ENCODE measurements at regions of chr1 and their contacts with region 1.

Region 1: DNA sequence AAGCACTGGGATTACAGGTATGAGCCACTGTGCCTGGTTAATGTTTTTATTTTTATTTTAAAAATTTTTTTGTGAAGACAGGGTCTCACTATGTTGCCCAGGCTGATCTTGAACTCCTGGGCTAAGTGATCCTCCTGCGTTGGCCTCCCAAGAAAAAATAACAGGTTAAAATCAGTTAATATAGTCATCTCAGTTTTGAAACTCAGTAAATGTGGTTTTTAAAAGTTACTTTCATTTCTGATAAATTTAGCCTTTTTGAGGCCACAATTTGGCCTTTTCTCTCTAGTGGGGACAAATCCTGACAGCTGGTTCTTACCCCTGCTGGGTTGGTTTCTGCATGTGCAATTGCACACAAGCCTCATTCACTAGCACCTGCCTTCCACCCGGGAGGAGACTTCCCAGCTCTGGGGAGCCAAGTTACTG is 13.3 kb downstream of the PMF1 start:
- DNase-seq: no peak
- ATAC-seq: no peak
- H3K4me3 ChIP-seq: no peak overlapping the region
- H3K4me3 Mint-ChIP-seq: no peak overlapping the region
- H3K27ac ChIP-seq: no peak overlapping the region
- H3K27ac Mint-ChIP-seq: no peak overlapping the region
- H3K4me1 ChIP-seq: no peaks in the 10 kb centered on the region
- H3K4me1 Mint-ChIP-seq: peaks cover 4% of the 10 kb centered on the region
- H3K27me3 ChIP-seq: no peaks in the 10 kb centered on the region
- H3K27me3 Mint-ChIP-seq: no peaks in the 10 kb centered on the region
- CTCF ChIP-seq: no peak

Region 2: DNA sequence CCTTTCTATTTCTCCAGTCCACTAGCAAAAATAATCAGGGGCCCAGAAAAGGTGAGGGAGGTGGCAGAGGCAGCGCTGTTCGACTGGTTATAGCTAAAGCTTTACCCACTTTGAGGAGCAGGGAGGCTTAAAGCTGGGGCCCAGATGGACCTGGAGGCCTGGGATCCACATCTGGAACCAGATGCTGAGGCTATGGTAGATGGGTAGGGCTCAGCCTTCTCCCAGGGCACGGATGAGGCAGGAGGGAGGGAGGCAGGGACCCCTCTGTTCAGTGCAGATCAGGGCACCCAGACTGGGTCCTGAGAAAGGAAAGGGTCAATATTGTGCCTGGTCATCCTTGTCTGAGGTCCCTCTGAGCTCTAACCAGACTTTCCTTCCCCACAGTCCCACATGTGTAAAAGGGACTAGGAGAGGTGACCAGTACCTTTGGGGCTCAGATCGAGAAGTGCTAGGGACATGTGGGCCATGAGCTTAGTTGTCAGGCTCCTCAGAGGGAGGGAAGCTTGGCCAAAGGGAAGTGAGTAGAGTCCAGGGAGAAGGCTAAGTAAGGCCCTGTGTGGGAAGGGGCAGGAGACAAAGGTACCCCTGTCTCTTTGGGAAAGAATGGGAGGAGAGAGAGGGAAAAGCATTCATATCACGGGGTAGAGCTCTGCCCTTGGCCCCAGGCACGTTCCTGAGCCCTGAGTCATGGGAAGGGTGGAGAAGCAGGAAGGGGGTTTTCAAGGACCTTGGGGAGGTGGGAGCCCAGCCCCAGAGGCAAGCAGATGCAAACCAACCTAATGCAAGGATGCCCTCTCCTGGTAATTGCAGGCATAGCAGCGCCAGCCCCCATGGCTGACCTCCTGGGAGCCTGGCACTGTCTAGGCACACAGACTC is 96.2 kb before region 1 on chr1:
- CTCF ChIA-PET with region 1: interaction called, 47 read pairs
- POLR2A ChIA-PET with region 1: no interaction called
- intact Hi-C with region 1: no loop called
- DNase-seq: peak; percentile 84
- ATAC-seq: peak; percentile 69
- H3K4me3 ChIP-seq: no peak overlapping the region
- H3K4me3 Mint-ChIP-seq: no peak overlapping the region
- H3K27ac ChIP-seq: no peak overlapping the region
- H3K27ac Mint-ChIP-seq: peak overlapping the region; percentile 26
- H3K4me1 ChIP-seq: peaks cover 14 to 21% of the 10 kb centered on the region in 2 donors
- H3K4me1 Mint-ChIP-seq: peaks cover 28% of the 10 kb centered on the region
- H3K27me3 ChIP-seq: peaks cover 0 to 4% (median 1%) of the 10 kb centered on the region in 4 experiments
- H3K27me3 Mint-ChIP-seq: peaks cover 2% of the 10 kb centered on the region
- CTCF ChIP-seq: peak; percentile 95

Region 3: GRCh38 chr1:156154317-156154749 is 71.8 kb before region 1 on chr1:
- CTCF ChIA-PET with region 1: interaction called, 381 read pairs
- POLR2A ChIA-PET with region 1: interaction called, 3 read pairs
- intact Hi-C with region 1: no loop called
- DNase-seq: peak; percentile 92
- ATAC-seq: peak; percentile 96
- H3K4me3 ChIP-seq: peak overlapping the region; percentile 38 to 71 (median 54)
- H3K4me3 Mint-ChIP-seq: peak overlapping the region; percentile 80
- H3K27ac ChIP-seq: peak overlapping the region; percentile 74 to 90
- H3K27ac Mint-ChIP-seq: peak overlapping the region; percentile 91
- H3K4me1 ChIP-seq: peaks cover 89 to 100% of the 10 kb centered on the region in 2 donors
- H3K4me1 Mint-ChIP-seq: peaks cover 94% of the 10 kb centered on the region
- H3K27me3 ChIP-seq: peaks cover 0 to 13% (median 4%) of the 10 kb centered on the region in 4 experiments
- H3K27me3 Mint-ChIP-seq: peaks cover 26% of the 10 kb centered on the region
- CTCF ChIP-seq: no peak

Region 4: DNA sequence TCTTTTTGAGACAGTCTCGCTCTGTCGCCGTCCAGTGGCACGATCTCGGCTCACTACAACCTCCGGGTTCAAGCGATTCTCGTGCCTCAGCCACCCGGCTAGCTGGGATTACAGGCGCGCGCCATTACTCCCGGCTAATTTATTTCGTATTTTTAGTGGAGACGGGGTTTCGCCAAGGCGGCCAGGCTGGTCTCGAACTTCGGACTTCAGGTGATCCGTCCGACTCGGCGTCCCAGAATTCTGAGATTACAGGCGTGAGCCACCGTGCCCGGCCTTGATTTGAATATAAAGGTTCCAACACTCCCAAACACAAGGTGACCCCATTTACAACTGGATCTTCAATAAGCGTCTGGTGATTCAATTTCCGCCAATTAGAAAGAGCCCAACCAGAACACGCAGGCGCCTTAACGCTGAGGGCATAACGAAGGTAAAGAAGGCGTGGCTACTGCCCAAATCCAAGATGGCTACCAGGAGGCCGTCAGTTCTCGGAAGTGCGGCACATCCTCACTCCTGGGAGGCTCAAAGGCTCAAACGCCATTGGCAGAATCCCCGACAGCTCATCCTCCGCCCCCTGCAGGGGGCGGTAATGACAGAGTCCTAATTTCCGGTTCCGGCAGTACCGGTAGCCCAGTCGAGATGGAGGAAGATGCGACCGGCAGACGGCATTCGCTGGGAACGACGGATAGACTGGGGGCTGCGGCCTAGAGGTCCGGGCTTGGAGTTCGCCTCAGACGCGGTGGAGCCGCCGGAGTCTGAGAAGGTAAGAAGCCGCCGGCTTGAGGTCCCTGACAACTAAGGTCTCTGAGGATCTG is 32.4 kb before region 1 on chr1 and contains the start of gene SLC25A44:
- CTCF ChIA-PET with region 1: interaction called, 27 read pairs
- POLR2A ChIA-PET with region 1: no interaction called
- intact Hi-C with region 1: loop called (anchors 1 kb)
- DNase-seq: peak; percentile 99
- ATAC-seq: peak; percentile 99
- H3K4me3 ChIP-seq: peak within 1 kb of the TSS; percentile 61 to 94 (median 84)
- H3K4me3 Mint-ChIP-seq: peak within 1 kb of the TSS; percentile 92
- H3K27ac ChIP-seq: peak within 1 kb of the TSS; percentile 80 to 86
- H3K27ac Mint-ChIP-seq: peak within 1 kb of the TSS; percentile 78
- H3K4me1 ChIP-seq: peaks cover 10 to 14% of the 10 kb centered on the region in 2 donors
- H3K4me1 Mint-ChIP-seq: peaks cover 36% of the 10 kb centered on the region
- H3K27me3 ChIP-seq: no peaks in the 10 kb centered on the region
- H3K27me3 Mint-ChIP-seq: no peaks in the 10 kb centered on the region
- CTCF ChIP-seq: peak; percentile 67
- total RNA-seq, gene SLC25A44: 26.6 and 27.2 TPM in 2 replicates

Region 5: GRCh38 chr1:156245451-156246232 is 19.5 kb after region 1 on chr1:
- CTCF ChIA-PET with region 1: interaction called, 10 read pairs
- POLR2A ChIA-PET with region 1: no interaction called
- intact Hi-C with region 1: no loop called
- DNase-seq: peak; percentile 57
- ATAC-seq: peak; percentile 64
- H3K4me3 ChIP-seq: peak overlapping the region in 4 of 5 experiments; percentile 26 to 60 (median 47)
- H3K4me3 Mint-ChIP-seq: peak overlapping the region; percentile 89
- H3K27ac ChIP-seq: no peak overlapping the region
- H3K27ac Mint-ChIP-seq: peak overlapping the region; percentile 59
- H3K4me1 ChIP-seq: peaks cover 14 to 15% of the 10 kb centered on the region in 2 donors
- H3K4me1 Mint-ChIP-seq: peaks cover 18% of the 10 kb centered on the region
- H3K27me3 ChIP-seq: peaks cover 0 to 12% (median 0%) of the 10 kb centered on the region in 4 experiments
- H3K27me3 Mint-ChIP-seq: peaks cover 7% of the 10 kb centered on the region
- CTCF ChIP-seq: no peak

Measured in B cell (primary cell).